Adrenal gland (tissue), 19 donors: ENCODE measurements at regions of chr10 and their contacts with region 1.

Region 1: DNA sequence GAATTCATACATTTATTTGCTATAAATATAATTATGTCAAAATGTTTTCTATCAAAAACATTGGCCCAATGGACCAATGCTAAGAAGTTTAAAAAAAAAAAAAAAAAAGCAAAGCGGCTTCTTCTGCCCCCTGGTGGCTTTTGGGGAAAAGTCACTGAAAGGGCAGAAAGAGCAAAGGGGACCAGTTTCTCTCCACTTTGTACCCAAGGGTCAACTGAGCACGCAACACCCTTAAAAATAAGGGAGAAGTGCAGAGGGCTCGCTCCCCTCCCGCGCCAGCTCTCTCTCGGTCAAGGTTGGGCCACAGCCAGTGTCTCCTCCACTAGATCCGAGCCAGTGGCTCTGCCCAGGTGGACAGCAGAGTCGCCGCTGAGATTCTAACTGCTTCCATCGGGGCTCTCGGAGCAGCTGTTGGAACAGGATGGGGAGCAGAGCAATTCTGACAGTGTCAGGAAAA is 136.4 kb upstream of the FGFR2 start:
- DNase-seq: peak in 3 of 7 donors; percentile 16 to 33 (median 19)
- H3K4me3 ChIP-seq: no peak overlapping the region
- H3K27ac ChIP-seq: no peak overlapping the region
- H3K4me1 ChIP-seq: no peaks in the 10 kb centered on the region
- H3K27me3 ChIP-seq: no peaks in the 10 kb centered on the region
- CTCF ChIP-seq: peak; percentile 12 to 74 (median 54)
- POLR2A ChIP-seq: no peak

Region 2: DNA sequence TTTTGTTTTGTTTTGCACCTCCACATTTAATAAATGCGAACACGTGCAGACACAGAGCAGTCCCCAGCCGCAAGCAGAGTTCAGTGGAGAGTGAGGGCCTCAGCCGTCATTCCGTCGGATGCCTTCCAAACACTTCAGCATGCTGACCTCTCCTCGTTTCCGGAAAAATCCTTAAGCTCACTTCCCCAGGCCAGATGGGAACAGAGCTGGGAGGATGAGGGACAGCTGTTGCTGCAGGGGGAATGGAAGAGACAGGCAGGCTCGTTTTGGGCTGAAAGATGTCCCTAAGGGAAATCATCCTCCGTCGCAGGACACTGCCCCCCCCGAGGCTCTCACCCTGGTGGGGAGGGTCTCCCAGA is 119.2 kb before region 1 on chr10:
- intact Hi-C with region 1: loop called in 1 of 2 experiments (anchors 10 kb)
- DNase-seq: peak in 1 of 7 donors; percentile 26
- H3K4me3 ChIP-seq: no peak overlapping the region
- H3K27ac ChIP-seq: no peak overlapping the region
- H3K4me1 ChIP-seq: no peaks in the 10 kb centered on the region
- H3K27me3 ChIP-seq: no peaks in the 10 kb centered on the region
- CTCF ChIP-seq: no peak
- POLR2A ChIP-seq: no peak